ENCODE measurements at regions of chr10 and their contacts with region 1.

Region 1: DNA sequence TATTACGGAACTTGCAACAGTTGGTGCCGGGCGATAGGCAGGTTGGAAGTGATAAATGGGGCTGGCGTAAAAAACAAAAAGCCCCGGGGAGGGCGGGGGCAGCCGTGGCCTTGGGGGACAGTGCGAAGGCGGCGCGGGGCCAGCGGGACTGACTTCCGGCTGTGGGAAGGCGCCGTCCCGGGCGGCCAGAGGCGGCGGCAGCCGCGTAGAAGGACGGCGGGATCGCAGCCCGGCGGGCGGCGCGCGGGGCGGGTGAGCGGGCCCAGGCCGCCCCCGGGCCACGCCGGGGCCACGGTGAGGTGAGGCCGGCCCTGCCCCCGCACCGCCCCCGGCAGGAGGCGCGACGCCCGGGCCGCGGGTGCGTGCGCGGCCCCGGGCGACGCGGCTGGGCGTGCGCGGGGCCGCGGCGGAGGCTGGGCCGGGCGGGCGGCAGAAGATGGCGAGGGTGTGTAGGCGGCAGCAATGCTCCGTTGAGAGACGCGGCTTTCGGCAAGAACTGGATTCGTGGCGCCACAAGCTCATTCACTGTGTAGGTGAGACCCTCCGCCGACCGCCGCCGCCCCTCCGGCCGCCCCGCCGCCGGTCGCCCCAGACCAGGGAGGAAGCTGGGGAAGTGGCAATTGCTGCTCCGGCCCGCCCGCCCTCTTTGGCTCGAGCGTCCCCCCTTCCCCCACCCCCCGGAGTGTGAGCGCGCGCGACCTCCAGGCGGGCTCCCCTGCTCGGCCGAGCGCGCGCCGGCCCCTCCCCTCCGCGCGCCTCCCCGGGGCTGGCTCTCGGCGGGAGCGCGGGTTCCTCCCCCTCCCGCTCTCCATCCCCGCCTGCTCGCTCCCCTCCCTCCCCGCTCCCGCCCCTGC is at the start of gene LCOR:
- DNase-seq: peak; percentile 86
- H3K4me3 ChIP-seq: peak within 1 kb of the TSS; percentile 78 to 92 (median 79)
- H3K27ac ChIP-seq: peak within 1 kb of the TSS; percentile 75
- H3K4me1 ChIP-seq: peaks cover 8% of the 10 kb centered on the region
- H3K27me3 ChIP-seq: no peaks in the 10 kb centered on the region
- CTCF ChIP-seq: no peak
- total RNA-seq, gene LCOR: 32.3 to 41.3 TPM

Region 2: DNA sequence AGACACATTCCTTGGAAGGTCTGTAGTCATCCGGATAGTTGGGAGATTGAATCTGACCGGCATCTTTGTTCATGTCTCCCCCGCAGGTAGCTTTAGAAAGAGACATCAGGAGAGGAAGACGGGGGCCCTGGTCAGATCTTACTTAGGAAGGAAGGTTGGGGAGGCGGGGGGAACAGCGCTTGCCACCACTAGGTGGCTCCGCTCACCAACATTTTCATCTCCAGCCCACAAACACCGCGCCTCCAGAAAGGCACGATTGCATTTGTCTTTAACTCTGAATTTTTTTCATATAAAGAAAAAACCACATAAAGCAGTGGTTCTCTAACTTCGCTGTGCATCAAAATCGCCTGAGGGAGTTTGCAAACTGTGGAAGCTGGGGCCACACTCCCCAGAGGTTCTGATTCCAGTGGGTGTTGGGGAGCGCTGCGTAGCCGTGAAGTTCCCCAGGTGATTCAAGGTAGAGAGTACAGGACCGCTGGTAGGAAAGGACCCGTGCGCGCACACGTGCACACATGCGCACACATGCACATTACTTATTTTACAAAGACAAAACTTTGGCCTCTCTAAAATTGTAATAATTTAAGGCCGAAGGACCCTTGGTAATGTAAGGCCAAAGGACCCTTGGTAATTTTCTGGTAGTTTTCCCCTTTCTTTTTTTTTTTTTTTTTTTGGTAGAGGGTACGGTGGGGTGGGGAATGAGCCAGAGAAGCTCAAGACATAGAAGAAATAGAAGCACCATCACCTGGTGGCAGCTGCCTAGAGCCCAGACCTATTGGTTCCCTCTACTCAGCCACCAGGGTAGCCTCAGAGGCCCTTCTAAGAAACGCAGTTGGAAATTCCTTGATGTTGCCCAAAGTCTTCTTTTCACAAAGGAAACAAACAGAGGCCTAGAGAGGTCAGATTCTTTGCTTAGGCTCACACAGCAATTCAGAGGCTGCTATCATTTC is 435.9 kb before region 1 on chr10:
- CTCF ChIA-PET with region 1: no interaction called
- dilution Hi-C with region 1: no loop called
- in situ Hi-C with region 1: loop called in 1 of 2 experiments (anchors 25 kb)
- intact Hi-C with region 1: loop called (anchors 1 kb)
- DNase-seq: peak; percentile 43
- H3K4me3 ChIP-seq: no peak overlapping the region
- H3K27ac ChIP-seq: no peak overlapping the region
- H3K4me1 ChIP-seq: no peaks in the 10 kb centered on the region
- H3K27me3 ChIP-seq: peaks cover 7% of the 10 kb centered on the region
- CTCF ChIP-seq: peak; percentile 72 to 87

Region 3: DNA sequence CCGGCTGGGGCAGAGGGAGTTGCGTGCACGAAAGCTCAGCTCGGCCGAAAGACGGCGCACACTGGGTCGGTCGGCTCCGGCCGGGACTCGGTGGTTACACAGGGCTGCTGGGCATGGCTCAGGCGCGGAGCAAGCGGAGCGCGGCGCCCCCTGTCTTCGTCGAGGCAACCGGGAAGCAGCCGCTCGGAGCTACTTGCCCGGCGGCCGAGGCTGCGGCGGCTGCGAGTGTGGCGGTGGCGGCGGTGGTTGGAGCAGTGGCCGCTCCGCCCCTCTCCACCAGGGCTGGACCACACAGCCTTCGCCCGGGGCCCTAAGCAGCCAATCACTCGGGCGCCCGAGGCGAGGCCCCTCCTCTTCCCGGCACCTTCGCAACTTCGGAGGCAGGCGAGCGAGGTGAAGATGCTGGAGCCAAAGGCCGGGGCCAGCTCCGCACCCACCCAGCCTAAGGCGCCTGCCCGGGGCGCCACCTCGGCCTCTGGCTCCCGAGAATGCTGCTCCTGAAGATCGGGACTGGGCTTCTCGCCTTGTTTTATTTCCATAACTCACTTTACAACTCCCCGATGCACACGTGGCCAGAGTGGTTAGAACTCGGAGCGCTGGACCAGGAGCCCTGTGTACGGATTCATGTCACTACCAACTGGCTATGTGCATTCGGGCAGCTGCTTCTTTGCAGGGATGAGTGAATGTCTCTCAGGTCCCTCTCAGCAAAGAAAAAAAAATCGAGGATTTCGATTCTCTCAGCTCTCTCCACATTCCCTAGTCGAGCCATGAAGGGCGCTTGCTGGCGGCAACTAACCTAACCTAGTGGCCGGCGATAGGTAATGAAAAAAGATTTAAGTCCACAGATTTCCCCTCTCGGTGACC is 318.2 kb before region 1 on chr10 and contains the start of gene TLL2:
- CTCF ChIA-PET with region 1: no interaction called
- dilution Hi-C with region 1: no loop called
- in situ Hi-C with region 1: no loop called
- intact Hi-C with region 1: loop called (anchors 5 kb)
- DNase-seq: peak; percentile 91
- H3K4me3 ChIP-seq: peak within 1 kb of the TSS; percentile 35 to 65 (median 54)
- H3K27ac ChIP-seq: no peak within 1 kb of the TSS
- H3K4me1 ChIP-seq: peaks cover 28% of the 10 kb centered on the region
- H3K27me3 ChIP-seq: no peaks in the 10 kb centered on the region
- CTCF ChIP-seq: peak; percentile 15 to 74
- total RNA-seq, gene TLL2: 0.17 to 0.59 TPM

Region 4: DNA sequence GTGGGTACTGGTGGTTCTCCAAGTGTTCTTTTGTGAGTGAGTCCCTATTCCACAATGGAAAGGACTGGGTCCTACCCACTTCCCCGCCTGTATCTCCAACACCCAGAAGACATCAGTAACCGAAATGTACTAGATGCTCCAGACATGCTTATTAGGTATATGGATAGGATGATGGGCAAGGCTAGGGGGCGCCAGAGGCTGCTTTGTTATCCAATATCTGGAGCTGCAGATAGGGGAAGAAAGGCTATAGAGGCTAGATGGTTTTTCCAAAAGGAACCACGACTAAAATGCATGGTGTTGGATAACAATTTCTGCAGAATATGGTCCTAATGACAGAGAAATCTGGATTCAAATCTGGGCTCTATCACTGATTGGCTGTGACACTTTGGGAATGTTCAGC is 189.1 kb before region 1 on chr10:
- CTCF ChIA-PET with region 1: interaction called, 3 read pairs
- dilution Hi-C with region 1: no loop called
- in situ Hi-C with region 1: no loop called
- intact Hi-C with region 1: loop called (anchors 1 kb)
- DNase-seq: no peak
- H3K4me3 ChIP-seq: no peak overlapping the region
- H3K27ac ChIP-seq: no peak overlapping the region
- H3K4me1 ChIP-seq: no peaks in the 10 kb centered on the region
- H3K27me3 ChIP-seq: no peaks in the 10 kb centered on the region
- CTCF ChIP-seq: peak; percentile 39 to 53

Region 5: DNA sequence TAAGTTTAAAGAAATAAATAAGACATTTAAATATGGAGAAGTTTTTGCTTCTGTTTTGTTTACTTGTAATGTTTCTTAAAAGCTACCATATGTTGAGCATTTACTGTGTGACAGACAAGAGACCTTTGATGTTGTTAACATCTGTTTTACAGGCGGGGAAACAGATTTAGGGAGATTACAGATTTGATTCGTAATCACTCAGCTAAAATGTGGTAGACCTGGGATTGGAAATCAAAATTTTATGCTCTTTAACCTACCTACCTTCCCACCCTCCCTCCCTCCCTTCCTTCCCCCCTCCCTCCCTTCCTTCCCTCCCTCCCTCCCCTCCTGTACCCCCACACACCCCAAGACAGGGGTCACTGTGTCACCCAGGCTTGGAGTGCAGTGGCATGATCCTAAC is 11.7 kb after region 1 on chr10:
- CTCF ChIA-PET with region 1: no interaction called
- dilution Hi-C with region 1: no loop called
- in situ Hi-C with region 1: no loop called
- intact Hi-C with region 1: loop called (anchors 1 kb)
- DNase-seq: no peak
- H3K4me3 ChIP-seq: no peak overlapping the region
- H3K27ac ChIP-seq: no peak overlapping the region
- H3K4me1 ChIP-seq: peaks cover 30% of the 10 kb centered on the region
- H3K27me3 ChIP-seq: no peaks in the 10 kb centered on the region
- CTCF ChIP-seq: no peak

Measured in mammary epithelial cell (primary cell).